ENCODE measurements at regions of chr5 and their contacts with region 1.

Region 1: DNA sequence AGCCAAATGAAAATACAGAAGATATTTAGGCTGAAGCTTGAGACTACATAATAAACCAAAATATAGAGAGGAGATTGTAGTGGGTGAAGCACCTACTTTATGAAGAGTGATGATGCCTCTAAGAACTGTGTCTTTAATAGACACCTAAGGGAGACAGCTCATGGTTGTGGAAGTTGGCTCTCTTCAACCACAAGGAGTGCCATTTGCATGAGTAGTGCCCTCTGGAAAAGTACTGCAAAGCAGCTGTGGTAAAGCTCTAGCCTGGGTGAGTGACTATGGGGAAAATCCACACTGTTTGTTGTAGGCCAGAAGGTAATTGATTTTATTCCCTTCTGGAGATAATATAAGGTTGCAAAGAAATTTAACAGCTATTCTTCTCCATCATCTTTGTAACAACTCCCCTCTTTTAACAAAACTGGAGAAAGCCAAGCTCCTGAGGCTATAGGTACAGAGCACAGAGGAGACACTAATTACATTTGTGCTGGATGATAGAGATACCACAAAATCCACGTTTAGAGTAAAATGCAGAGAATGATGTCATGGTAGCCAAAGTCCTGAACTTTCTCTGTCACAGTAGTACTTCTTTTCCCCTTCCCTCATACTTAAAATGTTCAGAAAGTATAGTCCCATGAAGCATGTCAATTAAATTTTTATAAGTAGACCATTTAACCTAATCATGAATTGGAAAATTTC is 122.8 kb downstream of the STARD4 start:
- DNase-seq: no peak
- CTCF ChIP-seq: no peak

Region 2: DNA sequence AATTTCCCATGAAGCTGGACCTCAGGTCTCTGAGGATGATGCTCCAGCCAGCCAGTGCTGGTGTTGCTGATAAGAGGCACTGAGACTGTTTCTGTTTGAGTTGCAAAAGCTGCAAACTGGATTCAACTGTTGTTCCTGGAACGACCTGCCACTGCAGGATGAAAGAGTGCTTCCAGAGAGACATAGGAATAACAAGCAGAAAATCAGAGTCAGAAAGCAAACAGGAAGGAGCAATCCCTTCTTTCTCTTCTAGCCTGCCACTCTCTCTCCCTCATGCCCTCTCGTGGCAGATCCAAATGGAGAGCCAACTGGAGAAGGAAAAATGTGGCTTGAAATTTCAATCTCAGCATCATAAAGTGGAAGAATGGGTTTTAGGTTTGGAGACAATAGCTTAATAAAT is 12.4 kb after region 1 on chr5:
- CTCF ChIA-PET with region 1: interaction called, 14 read pairs
- POLR2A ChIA-PET with region 1: no interaction called
- DNase-seq: no peak
- CTCF ChIP-seq: no peak